Activated T-helper 2 cell treated with anti-CD3 and anti-CD28 coated beads, Interferon-gamma antibody, Interleukin-2, Interleukin-4, amounts not matched to agents 10 μg/mL and 5 μg/mL and 100 μg/mL, durations not matched to agents 14 hours and 24 hours and 36 hours (primary cell): ENCODE measurements at regions of chr1 and their contacts with region 1.

Region 1: GRCh38 chr1:184163674-184164465 is 112.3 kb downstream of the TSEN15 start:
- DNase-seq: no peak
- H3K4me3 Mint-ChIP-seq: no peak overlapping the region
- H3K27ac Mint-ChIP-seq: peak overlapping the region; percentile 7
- H3K4me1 Mint-ChIP-seq: peaks cover 21% of the 10 kb centered on the region
- H3K27me3 Mint-ChIP-seq: peaks cover under 1% of the 10 kb centered on the region

Region 2: GRCh38 chr1:183454390-183454789 is 709.5 kb before region 1 on chr1:
- intact Hi-C with region 1: no loop called
- DNase-seq: no peak
- H3K4me3 Mint-ChIP-seq: no peak overlapping the region
- H3K27ac Mint-ChIP-seq: no peak overlapping the region
- H3K4me1 Mint-ChIP-seq: no peaks in the 10 kb centered on the region
- H3K27me3 Mint-ChIP-seq: peaks cover 25% of the 10 kb centered on the region

Region 3: DNA sequence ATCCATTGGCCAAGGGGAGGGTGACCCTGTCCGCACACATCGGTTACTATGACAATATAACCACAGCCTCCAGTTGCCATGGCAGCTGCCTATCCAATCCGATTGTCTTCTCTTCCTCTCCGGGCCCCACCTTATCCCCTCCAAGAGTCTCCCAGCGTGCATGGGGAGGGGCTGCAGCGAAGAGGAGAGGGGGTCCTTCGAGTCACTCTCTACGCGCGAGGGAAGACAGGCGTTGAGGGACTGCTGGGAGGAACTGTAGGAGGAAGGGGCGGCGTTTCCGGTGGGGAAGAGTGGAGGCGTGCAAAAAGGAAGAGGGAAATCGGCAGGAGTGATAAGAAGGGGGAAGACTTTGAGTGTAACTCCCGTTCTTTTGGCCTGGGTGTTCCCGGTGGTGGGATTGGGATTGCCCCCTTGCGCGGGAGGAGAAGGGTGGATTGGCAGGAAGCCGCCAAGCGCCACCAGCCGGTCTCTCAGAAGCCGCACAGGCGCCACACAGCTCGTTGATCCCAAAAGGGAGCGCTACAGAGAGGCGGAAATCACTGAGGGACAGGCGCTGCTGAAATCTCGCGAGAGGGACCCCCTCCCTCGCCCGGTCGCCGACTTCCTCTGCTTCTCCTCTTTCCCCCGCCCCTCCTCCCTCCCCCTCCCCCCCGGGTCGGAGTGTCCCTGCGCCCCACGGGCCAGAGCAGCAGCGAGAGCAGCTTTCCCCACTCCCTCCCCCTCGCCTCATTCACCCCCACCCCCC is 692.0 kb before region 1 on chr1:
- intact Hi-C with region 1: loop called (anchors 2 kb)
- DNase-seq: peak; percentile 92
- H3K4me3 Mint-ChIP-seq: peak overlapping the region; percentile 87
- H3K27ac Mint-ChIP-seq: peak overlapping the region; percentile 99
- H3K4me1 Mint-ChIP-seq: peaks cover 24% of the 10 kb centered on the region
- H3K27me3 Mint-ChIP-seq: no peaks in the 10 kb centered on the region

Region 4: DNA sequence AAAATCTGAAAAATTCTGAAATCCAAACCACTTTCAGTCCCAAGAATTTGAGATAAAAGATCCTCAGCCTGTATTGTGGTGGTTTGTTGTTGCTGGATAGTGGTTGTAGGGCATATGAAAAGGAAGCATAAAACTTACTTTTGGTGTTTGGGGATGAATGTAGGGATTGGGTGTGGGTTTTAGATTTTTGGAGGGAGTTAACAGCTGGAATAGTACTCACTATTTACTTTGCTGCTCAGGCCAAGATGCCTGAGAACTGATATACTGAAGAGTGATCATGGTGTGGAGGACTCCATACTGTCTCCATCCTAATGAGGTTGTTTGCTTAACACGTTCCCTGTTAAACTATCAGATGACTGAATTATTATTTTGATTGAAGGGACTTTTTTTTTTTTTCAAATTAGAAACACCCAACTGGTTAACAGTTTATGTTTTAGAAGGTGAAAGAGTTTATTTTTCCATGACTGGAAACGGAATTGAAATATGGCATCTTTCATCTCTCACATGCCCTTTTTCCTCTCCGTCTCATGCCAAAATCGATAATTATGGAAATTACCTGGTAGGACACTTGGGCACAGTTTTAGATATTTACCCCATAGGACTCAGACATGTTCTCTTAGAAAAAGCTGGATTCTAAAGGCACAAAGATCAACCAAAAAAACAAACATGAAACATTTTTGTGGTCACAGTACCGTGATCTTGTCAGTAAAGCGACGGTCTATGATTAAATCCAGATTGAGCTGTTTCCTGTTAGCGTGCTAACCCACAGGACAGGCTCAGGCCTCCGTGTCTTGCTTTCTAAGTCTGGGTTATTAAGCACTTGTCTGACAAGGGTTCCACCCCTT is 321.7 kb before region 1 on chr1:
- intact Hi-C with region 1: loop called (anchors 1 kb)
- DNase-seq: peak; percentile 12
- H3K4me3 Mint-ChIP-seq: peak overlapping the region; percentile 73
- H3K27ac Mint-ChIP-seq: peak overlapping the region; percentile 89
- H3K4me1 Mint-ChIP-seq: peaks cover 32% of the 10 kb centered on the region
- H3K27me3 Mint-ChIP-seq: no peaks in the 10 kb centered on the region

Region 5: GRCh38 chr1:184051485-184052193 is 112.2 kb before region 1 on chr1 and contains the start of gene TSEN15:
- intact Hi-C with region 1: loop called (anchors 2 kb)
- DNase-seq: peak; percentile 69
- H3K4me3 Mint-ChIP-seq: peak within 1 kb of the TSS; percentile 100
- H3K27ac Mint-ChIP-seq: peak within 1 kb of the TSS; percentile 96
- H3K4me1 Mint-ChIP-seq: peaks cover 30% of the 10 kb centered on the region
- H3K27me3 Mint-ChIP-seq: peaks cover 31% of the 10 kb centered on the region
- total RNA-seq, gene TSEN15: 35.1 TPM in 2 replicates

Region 6: GRCh38 chr1:184199438-184200085 is 35.7 kb after region 1 on chr1:
- intact Hi-C with region 1: loop called (anchors 5 kb)
- DNase-seq: no peak
- H3K4me3 Mint-ChIP-seq: no peak overlapping the region
- H3K27ac Mint-ChIP-seq: no peak overlapping the region
- H3K4me1 Mint-ChIP-seq: peaks cover 3% of the 10 kb centered on the region
- H3K27me3 Mint-ChIP-seq: peaks cover 17% of the 10 kb centered on the region

Region 7: GRCh38 chr1:184212649-184213314 is 48.9 kb after region 1 on chr1:
- intact Hi-C with region 1: no loop called
- DNase-seq: no peak
- H3K4me3 Mint-ChIP-seq: no peak overlapping the region
- H3K27ac Mint-ChIP-seq: no peak overlapping the region
- H3K4me1 Mint-ChIP-seq: no peaks in the 10 kb centered on the region
- H3K27me3 Mint-ChIP-seq: peaks cover 15% of the 10 kb centered on the region

Region 8: GRCh38 chr1:184494929-184495328 is 331.1 kb after region 1 on chr1:
- intact Hi-C with region 1: loop called (anchors 1 kb)
- DNase-seq: no peak
- H3K4me3 Mint-ChIP-seq: no peak overlapping the region
- H3K27ac Mint-ChIP-seq: no peak overlapping the region
- H3K4me1 Mint-ChIP-seq: peaks cover 30% of the 10 kb centered on the region
- H3K27me3 Mint-ChIP-seq: no peaks in the 10 kb centered on the region

Region 9: DNA sequence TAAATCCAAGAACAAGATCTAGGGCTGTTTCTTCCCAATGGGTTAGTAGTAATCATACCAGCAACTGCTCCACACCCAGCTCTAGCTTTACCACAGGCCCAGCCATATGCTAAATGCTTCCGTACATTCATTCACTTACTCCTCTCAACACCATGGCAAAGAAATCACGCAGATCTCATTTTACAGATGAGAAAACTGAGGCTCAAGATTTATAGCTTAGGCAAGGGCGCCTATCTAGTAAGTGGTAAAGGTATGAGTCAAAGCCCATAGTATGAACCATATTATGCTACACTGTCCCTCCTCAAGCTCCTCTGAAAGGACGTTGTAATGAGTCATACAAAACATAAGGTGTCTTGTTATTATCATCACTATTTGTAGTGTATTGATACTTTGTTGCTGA is 728.2 kb after region 1 on chr1:
- intact Hi-C with region 1: loop called (anchors 1 kb)
- DNase-seq: no peak
- H3K4me3 Mint-ChIP-seq: no peak overlapping the region
- H3K27ac Mint-ChIP-seq: peak overlapping the region; percentile 85
- H3K4me1 Mint-ChIP-seq: peaks cover 41% of the 10 kb centered on the region
- H3K27me3 Mint-ChIP-seq: no peaks in the 10 kb centered on the region